ENCODE measurements at regions of chr4 and their contacts with region 1.

Region 1: DNA sequence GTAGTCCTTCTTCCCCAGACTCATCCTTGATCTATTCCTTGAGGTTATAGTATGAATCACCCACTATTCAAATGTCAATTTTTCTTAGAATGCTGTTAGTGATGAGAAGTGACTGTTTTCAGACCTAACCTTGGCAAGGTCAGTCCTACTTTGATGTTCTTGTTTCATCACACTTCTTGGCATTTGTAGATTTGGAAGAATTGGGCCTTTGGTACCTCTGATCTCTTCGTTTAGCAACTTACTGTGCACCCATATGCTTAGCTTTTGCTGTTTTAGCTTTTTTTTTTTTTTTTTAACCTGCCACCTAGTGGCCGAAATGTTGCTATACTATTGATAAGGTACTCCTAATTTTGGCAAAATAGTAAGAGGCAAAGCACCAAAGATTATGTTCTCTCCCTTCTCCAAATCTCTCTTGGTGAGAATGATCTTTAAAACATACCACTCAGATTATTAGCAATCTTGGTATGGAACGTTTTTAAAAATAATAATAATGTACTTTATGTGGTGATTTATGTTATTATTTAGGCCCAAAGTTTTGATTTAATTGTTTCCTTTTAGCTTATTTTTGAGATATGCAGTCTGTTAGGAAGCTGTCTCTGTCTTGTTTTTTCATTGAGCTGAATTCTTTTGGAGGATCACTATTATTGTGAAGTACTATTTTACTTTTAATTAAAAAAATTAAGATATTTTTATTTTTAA is 16.6 kb downstream of the DCK start:
- DNase-seq: no peak
- H3K4me3 Mint-ChIP-seq: no peak overlapping the region
- H3K27ac Mint-ChIP-seq: no peak overlapping the region
- H3K4me1 Mint-ChIP-seq: peaks cover 41% of the 10 kb centered on the region
- H3K27me3 Mint-ChIP-seq: no peaks in the 10 kb centered on the region

Region 2: GRCh38 chr4:71020611-71021010 is 10.6 kb after region 1 on chr4:
- CTCF ChIA-PET with region 1: interaction called, 16 read pairs
- POLR2A ChIA-PET with region 1: interaction called, 3 read pairs
- DNase-seq: no peak
- H3K4me3 Mint-ChIP-seq: no peak overlapping the region
- H3K27ac Mint-ChIP-seq: no peak overlapping the region
- H3K4me1 Mint-ChIP-seq: no peaks in the 10 kb centered on the region
- H3K27me3 Mint-ChIP-seq: no peaks in the 10 kb centered on the region

Region 3: GRCh38 chr4:71074452-71075299 is 64.6 kb after region 1 on chr4:
- CTCF ChIA-PET with region 1: no interaction called
- POLR2A ChIA-PET with region 1: no interaction called
- DNase-seq: no peak
- H3K4me3 Mint-ChIP-seq: no peak overlapping the region
- H3K27ac Mint-ChIP-seq: no peak overlapping the region
- H3K4me1 Mint-ChIP-seq: no peaks in the 10 kb centered on the region
- H3K27me3 Mint-ChIP-seq: peaks cover 13% of the 10 kb centered on the region

Measured in activated CD4-positive, alpha-beta memory T cell treated with anti-CD3 and anti-CD28 coated beads, Interleukin-2, amount 10 ng/mL, durations not matched to agents 7 days and 5 days (primary cell).